ENCODE measurements at regions of chr12 and their contacts with region 1.

Region 1: DNA sequence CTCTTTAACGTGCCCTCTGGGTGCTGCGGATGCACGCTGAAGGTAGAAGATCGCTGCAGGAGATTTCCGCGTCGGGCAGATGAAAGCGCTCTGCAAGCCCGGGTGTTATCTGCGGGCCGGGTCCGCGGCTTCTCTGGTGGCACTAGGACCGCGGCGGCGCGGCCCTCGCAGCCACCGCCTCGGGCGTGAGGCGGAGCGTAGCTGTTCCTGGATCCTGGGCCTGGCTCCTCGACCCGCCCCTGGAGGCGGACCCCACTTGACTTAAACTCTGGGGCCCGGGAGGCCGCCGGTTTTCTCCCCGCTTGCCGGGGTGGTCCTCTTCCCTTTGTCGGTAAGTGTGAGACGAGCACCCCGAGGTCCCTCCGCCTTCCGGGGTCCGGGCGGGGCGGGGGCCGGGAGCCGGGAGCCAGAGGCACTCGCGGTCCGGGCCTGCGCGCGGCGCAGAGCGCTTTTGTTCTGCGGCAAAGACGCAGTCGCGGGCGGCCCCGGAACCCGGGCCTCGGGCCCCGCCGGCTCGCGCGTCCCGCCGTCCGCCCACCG is at the start of gene RESF1:
- DNase-seq: peak; percentile 67 to 89 (median 85)
- ATAC-seq: peak; percentile 88
- H3K4me3 ChIP-seq: peak within 1 kb of the TSS; percentile 91
- H3K4me3 Mint-ChIP-seq: peak within 1 kb of the TSS; percentile 91 to 97 (median 94)
- H3K27ac ChIP-seq: peak within 1 kb of the TSS; percentile 86
- H3K27ac Mint-ChIP-seq: peak within 1 kb of the TSS; percentile 91 to 98 (median 96)
- H3K4me1 ChIP-seq: peaks cover 23 to 49% of the 10 kb centered on the region in 2 donors
- H3K4me1 Mint-ChIP-seq: peaks cover 43 to 74% (median 57%) of the 10 kb centered on the region in 7 donors
- H3K27me3 ChIP-seq: no peaks in the 10 kb centered on the region
- H3K27me3 Mint-ChIP-seq: no peaks in the 10 kb centered on the region
- total RNA-seq, gene RESF1: 141 to 490 (median 161) TPM

Region 2: DNA sequence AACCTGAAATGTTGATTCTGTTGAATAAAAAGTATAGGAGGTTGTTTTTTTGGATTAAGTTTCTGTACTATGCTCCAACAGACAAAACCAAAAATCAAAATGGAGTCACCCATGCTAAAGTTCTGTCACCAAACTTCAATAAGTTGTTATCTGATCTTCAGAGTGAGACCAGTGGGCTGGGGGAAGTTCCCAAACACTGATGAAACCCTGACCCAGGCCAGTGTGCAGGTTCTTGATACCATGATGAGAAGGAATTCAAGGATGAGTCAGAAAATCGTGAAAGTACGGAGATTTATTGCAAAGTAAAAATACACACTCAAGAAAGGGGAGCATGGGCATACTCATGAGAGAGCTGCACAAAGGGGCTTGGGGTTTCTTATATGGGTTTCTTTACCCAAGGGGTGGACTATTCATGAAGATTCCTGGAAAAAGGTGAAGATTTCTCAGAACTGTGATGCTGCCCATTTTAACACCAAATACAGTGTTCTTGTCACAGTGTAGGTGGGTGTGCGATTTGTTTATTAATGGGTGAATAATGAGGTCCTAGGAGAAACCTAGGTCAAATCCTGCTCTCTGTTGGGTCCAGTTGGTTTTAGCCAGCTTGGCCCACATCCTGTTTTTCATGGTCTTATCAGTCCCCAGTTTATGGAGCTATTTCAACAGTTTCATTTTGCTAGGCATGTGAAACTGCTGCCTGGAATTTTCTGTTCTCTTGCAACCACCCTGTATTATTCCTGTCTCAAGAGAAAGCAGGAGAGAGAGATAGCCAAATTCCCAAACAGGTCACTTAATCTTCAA is 340.8 kb before region 1 on chr12:
- CTCF ChIA-PET with region 1: no interaction called
- POLR2A ChIA-PET with region 1: no interaction called
- intact Hi-C with region 1: no loop called
- DNase-seq: no peak
- ATAC-seq: no peak
- H3K4me3 ChIP-seq: no peak overlapping the region
- H3K4me3 Mint-ChIP-seq: no peak overlapping the region
- H3K27ac ChIP-seq: no peak overlapping the region
- H3K27ac Mint-ChIP-seq: no peak overlapping the region
- H3K4me1 ChIP-seq: no peaks in the 10 kb centered on the region
- H3K4me1 Mint-ChIP-seq: no peaks in the 10 kb centered on the region
- H3K27me3 ChIP-seq: no peaks in the 10 kb centered on the region
- H3K27me3 Mint-ChIP-seq: peaks cover 0 to 6% (median 4%) of the 10 kb centered on the region in 5 donors

Region 3: DNA sequence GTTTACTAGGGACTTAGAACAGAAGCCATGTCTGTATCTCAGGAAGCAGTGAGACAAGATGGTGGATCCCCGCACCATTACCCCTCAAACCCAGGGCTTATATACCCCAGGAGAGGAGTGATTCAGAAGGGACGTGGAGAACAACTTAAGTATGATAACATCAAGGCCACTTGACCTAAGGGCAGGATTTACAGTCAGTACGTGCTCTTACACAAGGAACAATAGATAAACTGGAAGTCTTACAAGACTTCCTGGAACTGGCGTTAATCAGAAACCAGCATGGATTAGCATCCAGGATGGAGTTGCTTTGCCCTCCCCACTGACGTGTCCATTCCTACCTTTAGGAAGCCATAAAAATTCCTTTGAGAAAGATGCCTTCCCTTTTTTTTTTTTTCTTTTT is 308.3 kb before region 1 on chr12:
- CTCF ChIA-PET with region 1: interaction called, 6 read pairs
- POLR2A ChIA-PET with region 1: interaction called, 21 read pairs
- intact Hi-C with region 1: loop called (anchors 1 kb)
- DNase-seq: no peak
- ATAC-seq: no peak
- H3K4me3 ChIP-seq: no peak overlapping the region
- H3K4me3 Mint-ChIP-seq: no peak overlapping the region
- H3K27ac ChIP-seq: no peak overlapping the region
- H3K27ac Mint-ChIP-seq: no peak overlapping the region
- H3K4me1 ChIP-seq: peaks cover 0 to 7% of the 10 kb centered on the region in 2 donors
- H3K4me1 Mint-ChIP-seq: peaks cover 6 to 16% (median 13%) of the 10 kb centered on the region in 7 donors
- H3K27me3 ChIP-seq: no peaks in the 10 kb centered on the region
- H3K27me3 Mint-ChIP-seq: no peaks in the 10 kb centered on the region

Region 4: DNA sequence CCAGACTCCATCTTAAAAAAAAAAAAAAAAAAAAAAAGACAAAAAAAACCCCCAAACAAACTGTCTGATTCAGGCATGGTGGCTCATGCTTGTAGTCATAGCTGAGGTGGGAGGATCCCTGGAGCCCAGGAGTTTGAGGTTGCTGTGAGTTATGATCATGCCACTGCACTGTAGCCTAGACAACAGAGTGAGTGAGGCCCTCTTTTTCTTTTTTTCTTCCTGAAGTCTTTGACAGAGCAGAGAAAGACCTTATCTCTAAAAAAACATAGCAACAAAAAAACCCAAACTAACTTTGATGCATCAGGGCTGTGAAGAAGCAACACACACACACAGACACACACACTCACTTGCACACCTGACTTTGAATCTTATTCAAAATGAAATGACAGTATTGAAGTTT is 222.8 kb before region 1 on chr12:
- CTCF ChIA-PET with region 1: no interaction called
- POLR2A ChIA-PET with region 1: interaction called, 23 read pairs
- intact Hi-C with region 1: no loop called
- DNase-seq: peak in 8 of 9 donors; percentile 50 to 92 (median 85)
- ATAC-seq: peak; percentile 96
- H3K4me3 ChIP-seq: no peak overlapping the region
- H3K4me3 Mint-ChIP-seq: peak overlapping the region; percentile 34 to 78 (median 42)
- H3K27ac ChIP-seq: peak overlapping the region; percentile 63
- H3K27ac Mint-ChIP-seq: peak overlapping the region; percentile 78 to 97 (median 91)
- H3K4me1 ChIP-seq: peaks cover 4 to 27% of the 10 kb centered on the region in 2 donors
- H3K4me1 Mint-ChIP-seq: peaks cover 19 to 81% (median 67%) of the 10 kb centered on the region in 7 donors
- H3K27me3 ChIP-seq: no peaks in the 10 kb centered on the region
- H3K27me3 Mint-ChIP-seq: no peaks in the 10 kb centered on the region

Region 5: GRCh38 chr12:31890295-31891285 is 68.6 kb before region 1 on chr12:
- CTCF ChIA-PET with region 1: interaction called, 7 read pairs
- POLR2A ChIA-PET with region 1: interaction called, 103 read pairs
- intact Hi-C with region 1: loop called in 1 of 2 experiments (anchors 1 kb)
- DNase-seq: peak in 7 of 9 donors; percentile 30 to 77 (median 74)
- ATAC-seq: peak; percentile 87
- H3K4me3 ChIP-seq: peak overlapping the region; percentile 2
- H3K4me3 Mint-ChIP-seq: peak overlapping the region; percentile 51 to 82 (median 72)
- H3K27ac ChIP-seq: peak overlapping the region; percentile 56
- H3K27ac Mint-ChIP-seq: peak overlapping the region; percentile 83 to 98 (median 90)
- H3K4me1 ChIP-seq: peaks cover 40 to 66% of the 10 kb centered on the region in 2 donors
- H3K4me1 Mint-ChIP-seq: peaks cover 22 to 80% (median 60%) of the 10 kb centered on the region in 7 donors
- H3K27me3 ChIP-seq: no peaks in the 10 kb centered on the region
- H3K27me3 Mint-ChIP-seq: no peaks in the 10 kb centered on the region

Region 6: GRCh38 chr12:31989571-31990362 is 30.5 kb after region 1 on chr12:
- CTCF ChIA-PET with region 1: no interaction called
- POLR2A ChIA-PET with region 1: interaction called, 15 read pairs
- intact Hi-C with region 1: loop called in 1 of 2 experiments (anchors 5 kb)
- DNase-seq: no peak
- ATAC-seq: no peak
- H3K4me3 ChIP-seq: no peak overlapping the region
- H3K4me3 Mint-ChIP-seq: peak overlapping the region in 1 of 10 donors; percentile 81
- H3K27ac ChIP-seq: no peak overlapping the region
- H3K27ac Mint-ChIP-seq: peak overlapping the region in 8 of 9 donors; percentile 4 to 82 (median 70)
- H3K4me1 ChIP-seq: peaks cover 0 to 5% of the 10 kb centered on the region in 2 donors
- H3K4me1 Mint-ChIP-seq: peaks cover 5 to 55% (median 38%) of the 10 kb centered on the region in 7 donors
- H3K27me3 ChIP-seq: no peaks in the 10 kb centered on the region
- H3K27me3 Mint-ChIP-seq: no peaks in the 10 kb centered on the region

Region 7: DNA sequence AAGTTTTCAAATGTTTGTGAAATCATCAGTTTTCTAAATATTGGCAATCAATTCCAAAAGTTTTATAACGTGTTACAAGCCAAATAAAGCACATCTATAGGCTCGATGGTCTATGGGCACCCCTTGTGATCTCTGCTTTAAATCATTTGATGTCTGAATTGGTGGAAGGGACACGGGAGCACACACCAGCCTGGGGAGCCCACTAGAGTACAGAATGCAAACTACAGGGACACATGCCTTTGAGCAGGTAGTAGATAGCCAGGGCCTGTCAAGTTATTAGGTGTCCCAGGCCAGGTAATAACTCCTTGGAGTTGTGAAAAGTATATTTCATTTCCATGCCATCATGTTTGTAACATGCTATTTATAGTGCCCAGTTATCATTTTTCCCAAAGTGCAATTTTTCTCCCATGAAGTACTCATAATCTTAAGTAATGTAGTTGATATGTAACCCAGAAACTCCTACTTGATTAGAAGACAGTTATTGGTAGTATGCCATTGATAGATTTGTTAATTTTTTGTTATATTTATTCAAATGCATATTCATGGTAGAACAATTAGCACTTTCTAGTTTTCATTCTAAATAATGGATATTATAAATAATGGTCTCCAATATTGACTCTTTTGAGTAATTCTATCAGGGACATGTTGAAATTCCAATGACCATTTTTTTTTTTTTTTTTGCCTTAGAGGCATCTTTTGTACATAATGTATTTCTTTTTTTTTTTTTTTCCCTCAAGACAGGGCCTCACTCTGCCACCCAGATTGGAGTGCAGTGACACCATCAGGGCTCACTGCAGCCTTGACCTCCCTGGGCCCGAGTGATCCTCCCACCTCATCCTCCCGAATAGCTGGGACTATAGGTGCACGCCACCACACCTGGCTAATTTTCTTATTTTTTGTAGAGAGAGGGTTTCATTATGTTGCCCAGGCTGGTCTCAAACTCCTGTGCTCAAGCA is 343.3 kb after region 1 on chr12:
- CTCF ChIA-PET with region 1: no interaction called
- POLR2A ChIA-PET with region 1: no interaction called
- intact Hi-C with region 1: loop called (anchors 2 to 10 kb)
- DNase-seq: peak in 4 of 9 donors; percentile 8 to 28 (median 17)
- ATAC-seq: peak; percentile 71
- H3K4me3 ChIP-seq: no peak overlapping the region
- H3K4me3 Mint-ChIP-seq: no peak overlapping the region
- H3K27ac ChIP-seq: no peak overlapping the region
- H3K27ac Mint-ChIP-seq: peak overlapping the region in 5 of 9 donors; percentile 25 to 62 (median 31)
- H3K4me1 ChIP-seq: no peaks in the 10 kb centered on the region
- H3K4me1 Mint-ChIP-seq: peaks cover 0 to 19% (median 0%) of the 10 kb centered on the region in 7 donors
- H3K27me3 ChIP-seq: no peaks in the 10 kb centered on the region
- H3K27me3 Mint-ChIP-seq: no peaks in the 10 kb centered on the region